Activated B cell treated with CpG ODN at 0.5 μM for 24 hours (primary cell): ENCODE measurements at regions of chr2 and their contacts with region 1.

Region 1: GRCh38 chr2:134897932-134898331 is 20.7 kb upstream of the CCNT2 start:
- DNase-seq: no peak
- ATAC-seq: no peak
- H3K4me3 Mint-ChIP-seq: no peak overlapping the region
- H3K27ac Mint-ChIP-seq: no peak overlapping the region
- H3K4me1 Mint-ChIP-seq: no peaks in the 10 kb centered on the region
- H3K27me3 Mint-ChIP-seq: no peaks in the 10 kb centered on the region
- CTCF ChIP-seq: no peak

Region 2: GRCh38 chr2:134453476-134453875 is 444.5 kb before region 1 on chr2:
- CTCF ChIA-PET with region 1: interaction called, 26 read pairs
- POLR2A ChIA-PET with region 1: no interaction called
- intact Hi-C with region 1: loop called (anchors 1 kb)
- DNase-seq: no peak
- ATAC-seq: no peak
- H3K4me3 Mint-ChIP-seq: no peak overlapping the region
- H3K27ac Mint-ChIP-seq: no peak overlapping the region
- H3K4me1 Mint-ChIP-seq: no peaks in the 10 kb centered on the region
- H3K27me3 Mint-ChIP-seq: no peaks in the 10 kb centered on the region
- CTCF ChIP-seq: no peak

Region 3: DNA sequence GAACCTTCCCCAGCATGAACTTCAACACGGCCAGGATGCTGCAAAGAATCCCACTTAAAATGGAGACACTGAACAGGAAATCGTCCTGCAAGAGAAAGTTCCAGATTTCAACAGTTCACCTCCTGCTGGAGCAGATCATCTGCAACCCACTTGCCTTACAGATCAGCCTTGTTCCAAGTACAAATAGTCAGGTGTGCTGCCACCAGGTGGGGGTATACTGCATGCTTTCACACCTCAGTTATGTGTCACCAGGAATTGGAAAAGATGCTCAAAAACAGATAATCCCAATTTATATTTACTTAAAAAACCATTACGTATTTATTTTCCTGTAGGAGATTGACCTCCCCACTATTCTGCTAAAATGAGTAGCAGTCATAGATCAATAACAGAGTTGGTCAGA is 431.8 kb before region 1 on chr2:
- CTCF ChIA-PET with region 1: interaction called, 13 read pairs
- POLR2A ChIA-PET with region 1: no interaction called
- intact Hi-C with region 1: loop called (anchors 1 kb)
- DNase-seq: no peak
- ATAC-seq: no peak
- H3K4me3 Mint-ChIP-seq: no peak overlapping the region
- H3K27ac Mint-ChIP-seq: no peak overlapping the region
- H3K4me1 Mint-ChIP-seq: peaks cover 2% of the 10 kb centered on the region
- H3K27me3 Mint-ChIP-seq: no peaks in the 10 kb centered on the region
- CTCF ChIP-seq: no peak

Region 4: GRCh38 chr2:134657637-134658250 is 240.2 kb before region 1 on chr2:
- CTCF ChIA-PET with region 1: interaction called, 6 read pairs
- POLR2A ChIA-PET with region 1: no interaction called
- intact Hi-C with region 1: loop called (anchors 2 kb)
- DNase-seq: no peak
- ATAC-seq: no peak
- H3K4me3 Mint-ChIP-seq: no peak overlapping the region
- H3K27ac Mint-ChIP-seq: no peak overlapping the region
- H3K4me1 Mint-ChIP-seq: peaks cover 3% of the 10 kb centered on the region
- H3K27me3 Mint-ChIP-seq: no peaks in the 10 kb centered on the region
- CTCF ChIP-seq: no peak

Region 5: GRCh38 chr2:134782792-134783191 is 115.1 kb before region 1 on chr2:
- CTCF ChIA-PET with region 1: no interaction called
- POLR2A ChIA-PET with region 1: no interaction called
- intact Hi-C with region 1: loop called (anchors 1 kb)
- DNase-seq: no peak
- ATAC-seq: peak; percentile 66
- H3K4me3 Mint-ChIP-seq: no peak overlapping the region
- H3K27ac Mint-ChIP-seq: no peak overlapping the region
- H3K4me1 Mint-ChIP-seq: peaks cover 8% of the 10 kb centered on the region
- H3K27me3 Mint-ChIP-seq: no peaks in the 10 kb centered on the region
- CTCF ChIP-seq: peak; percentile 47

Region 6: DNA sequence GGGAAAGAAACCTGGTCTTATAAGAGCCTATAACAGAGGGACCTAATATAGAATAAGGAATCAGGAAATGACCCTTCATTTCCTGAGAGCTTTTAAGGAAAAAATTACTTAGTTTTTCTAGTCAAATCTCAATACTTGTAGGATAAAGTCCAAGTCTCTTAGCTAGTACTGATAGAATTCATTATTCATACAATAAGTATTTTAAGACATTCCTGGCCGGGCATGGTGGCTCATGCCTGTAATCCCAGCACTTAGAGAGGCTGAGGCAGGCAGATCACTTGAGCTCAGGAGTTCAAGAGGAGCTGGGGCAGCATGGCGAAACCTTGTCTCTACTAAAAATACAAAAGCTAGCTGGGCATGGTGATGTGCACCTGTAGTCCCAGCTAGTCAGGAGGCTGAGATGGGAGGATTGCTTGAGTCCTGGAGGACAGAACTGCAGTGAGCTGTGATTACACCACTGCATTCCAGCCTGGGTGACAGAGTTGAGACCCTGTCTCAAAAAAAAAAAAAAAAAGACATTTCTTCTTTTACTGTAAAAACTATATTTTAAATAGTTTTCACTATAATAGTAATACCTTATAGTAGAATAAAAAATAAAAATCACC is 157.4 kb after region 1 on chr2:
- CTCF ChIA-PET with region 1: no interaction called
- POLR2A ChIA-PET with region 1: no interaction called
- intact Hi-C with region 1: no loop called
- DNase-seq: no peak
- ATAC-seq: no peak
- H3K4me3 Mint-ChIP-seq: no peak overlapping the region
- H3K27ac Mint-ChIP-seq: no peak overlapping the region
- H3K4me1 Mint-ChIP-seq: peaks cover 49% of the 10 kb centered on the region
- H3K27me3 Mint-ChIP-seq: no peaks in the 10 kb centered on the region
- CTCF ChIP-seq: no peak